Dendritic cell treated with granulocyte-macrophage colony-stimulating factor and Interleukin-4, amounts not matched to agents 40 ng/mL and 50 ng/mL, for 4 days (primary cell): ENCODE measurements at regions of chr5 and their contacts with region 1.

Region 1: GRCh38 chr5:176447982-176448608 is at the start of gene FAF2:
- H3K4me3 Mint-ChIP-seq: peak within 1 kb of the TSS; percentile 91
- H3K27ac Mint-ChIP-seq: peak within 1 kb of the TSS; percentile 95
- H3K4me1 Mint-ChIP-seq: peaks cover 34% of the 10 kb centered on the region
- H3K27me3 Mint-ChIP-seq: no peaks in the 10 kb centered on the region

Region 2: GRCh38 chr5:176361437-176362232 is 86.5 kb before region 1 on chr5 and contains the start of gene KIAA1191:
- intact Hi-C with region 1: loop called (anchors 5 kb)
- H3K4me3 Mint-ChIP-seq: peak within 1 kb of the TSS; percentile 96
- H3K27ac Mint-ChIP-seq: peak within 1 kb of the TSS; percentile 90
- H3K4me1 Mint-ChIP-seq: peaks cover 28% of the 10 kb centered on the region
- H3K27me3 Mint-ChIP-seq: peaks cover 26% of the 10 kb centered on the region

Region 3: GRCh38 chr5:176388444-176389134 is 59.5 kb before region 1 on chr5 and contains the starts of genes HIGD2A and NOP16:
- intact Hi-C with region 1: loop called (anchors 1 kb)
- H3K4me3 Mint-ChIP-seq: peak within 1 kb of the TSS; percentile 100
- H3K27ac Mint-ChIP-seq: peak within 1 kb of the TSS; percentile 100
- H3K4me1 Mint-ChIP-seq: peaks cover 77% of the 10 kb centered on the region
- H3K27me3 Mint-ChIP-seq: no peaks in the 10 kb centered on the region

Region 4: DNA sequence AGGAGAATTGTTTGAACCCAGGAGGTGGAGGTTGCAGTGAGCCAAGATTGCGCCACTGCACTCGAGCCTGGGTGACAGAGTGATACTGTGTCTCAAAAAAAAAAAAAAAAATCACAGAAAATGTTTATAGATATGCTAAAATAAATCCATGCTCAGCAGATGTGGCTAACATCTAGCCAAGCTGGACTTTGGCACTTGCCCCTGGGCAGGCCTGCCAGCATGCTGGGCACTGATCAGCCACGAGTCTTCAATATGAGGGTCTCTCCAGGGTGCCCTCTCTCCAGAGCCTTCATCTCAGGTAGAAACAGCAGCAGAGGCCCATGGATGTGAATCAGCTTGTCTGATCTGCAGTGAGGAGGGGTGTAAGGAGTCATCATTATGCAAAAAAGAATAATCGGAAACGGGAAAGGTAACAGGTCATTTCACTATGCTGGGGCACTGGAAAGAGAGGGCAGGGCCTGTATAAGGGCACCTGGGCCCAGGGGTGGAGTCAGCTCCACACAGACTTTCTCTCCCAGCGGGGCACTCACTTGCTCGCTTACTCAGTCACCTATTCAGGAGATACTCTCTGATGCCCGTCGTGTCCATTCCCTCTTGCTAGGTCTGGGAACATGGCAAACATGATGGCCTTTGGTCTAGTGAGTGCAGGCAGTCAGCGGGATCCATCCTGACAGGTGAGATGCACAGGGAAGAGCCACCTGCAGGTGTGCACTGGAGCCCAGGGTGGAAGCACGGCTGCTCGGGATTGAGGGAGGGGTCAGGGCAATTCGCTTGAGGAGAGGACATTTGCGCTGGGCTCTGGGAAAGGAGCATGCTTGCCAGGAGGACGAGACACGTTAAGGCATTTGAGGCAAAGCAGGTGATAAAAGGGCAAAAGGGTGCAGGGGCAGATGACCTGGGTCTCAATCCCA is 72.0 kb after region 1 on chr5:
- intact Hi-C with region 1: no loop called
- H3K4me3 Mint-ChIP-seq: no peak overlapping the region
- H3K27ac Mint-ChIP-seq: no peak overlapping the region
- H3K4me1 Mint-ChIP-seq: peaks cover 16% of the 10 kb centered on the region
- H3K27me3 Mint-ChIP-seq: no peaks in the 10 kb centered on the region

Region 5: GRCh38 chr5:176537608-176538504 is 89.8 kb after region 1 on chr5:
- intact Hi-C with region 1: loop called (anchors 5 kb)
- H3K4me3 Mint-ChIP-seq: peak overlapping the region; percentile 94
- H3K27ac Mint-ChIP-seq: peak overlapping the region; percentile 96
- H3K4me1 Mint-ChIP-seq: peaks cover 72% of the 10 kb centered on the region
- H3K27me3 Mint-ChIP-seq: no peaks in the 10 kb centered on the region